ENCODE measurements at regions of chr1 and their contacts with region 1.

Region 1: DNA sequence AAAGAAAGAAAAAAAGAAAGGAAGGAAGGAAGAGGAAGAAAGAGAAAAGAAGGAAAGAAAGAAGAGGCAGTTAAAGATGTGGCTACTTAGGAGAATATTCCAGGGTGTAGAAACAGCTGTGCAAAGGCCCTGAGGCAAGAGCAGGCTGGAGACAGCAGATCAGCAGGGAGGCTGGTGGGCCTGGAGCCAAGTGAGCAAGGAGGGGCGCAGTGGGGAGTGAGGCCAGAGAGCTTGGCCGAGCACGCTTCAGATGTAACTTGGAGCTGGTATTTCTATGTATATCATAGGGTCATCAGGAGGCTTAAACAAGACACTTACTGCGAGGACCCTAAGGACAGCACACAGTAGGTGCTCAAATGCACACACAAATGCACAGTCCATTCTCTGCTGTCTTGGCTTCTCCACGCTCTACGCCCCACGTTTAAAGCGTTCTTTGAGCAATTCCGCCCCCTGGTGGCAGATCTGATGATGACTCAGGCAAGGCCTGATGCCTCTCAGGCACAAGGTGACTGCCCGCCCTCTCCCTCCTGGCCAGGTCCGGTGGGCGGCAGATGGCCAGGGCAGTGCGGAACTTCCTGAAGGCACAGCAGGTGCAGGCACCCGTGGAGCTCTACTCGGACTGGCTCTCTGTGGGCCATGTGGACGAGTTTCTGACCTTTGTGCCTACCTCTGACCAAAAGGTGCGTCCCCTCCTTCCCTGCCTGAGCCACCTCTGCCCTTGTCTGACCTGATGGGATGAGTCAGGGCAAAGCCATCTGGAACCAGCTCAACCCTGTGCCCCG is 11.9 kb upstream of the PADI3 start:
- DNase-seq: peak; percentile 95
- ATAC-seq: peak; percentile 84

Region 2: DNA sequence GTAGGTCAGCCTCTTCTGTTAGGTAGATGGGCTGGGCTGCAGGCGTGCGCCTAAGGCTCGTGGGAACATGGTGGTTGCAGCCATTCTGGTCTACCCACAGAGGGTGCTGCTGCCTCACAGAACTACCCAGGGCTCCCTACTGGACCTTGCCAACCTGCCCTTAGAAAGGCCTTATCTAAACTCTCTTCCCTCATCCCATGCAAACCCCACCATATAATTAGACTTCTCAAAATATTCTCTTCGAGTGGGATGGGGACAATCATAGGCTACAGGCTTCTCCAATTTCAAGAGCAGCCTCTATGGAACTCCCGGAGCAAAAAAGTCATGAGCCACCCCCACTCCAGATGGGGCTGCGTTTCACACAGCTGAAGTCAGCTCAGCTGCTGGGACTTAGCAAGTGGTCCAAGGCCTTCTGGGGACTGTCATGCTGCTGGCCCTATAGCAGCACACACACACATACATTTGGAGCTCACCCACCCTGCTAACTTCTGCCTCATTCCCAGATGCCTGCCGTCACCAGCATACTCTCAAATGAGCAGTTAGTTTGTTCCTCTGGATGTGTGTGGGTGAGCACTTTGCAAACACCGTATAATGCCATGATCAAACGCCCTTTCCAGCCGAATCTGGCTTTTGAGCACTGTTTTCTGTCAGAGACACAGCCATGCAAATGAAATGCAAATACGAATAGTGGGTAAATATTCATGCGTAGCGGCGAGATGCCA is 177.1 kb before region 1 on chr1:
- intact Hi-C with region 1: loop called (anchors 5 kb)
- DNase-seq: peak; percentile 74
- ATAC-seq: peak; percentile 83

Region 3: GRCh38 chr1:17119773-17120480 is 117.0 kb before region 1 on chr1:
- intact Hi-C with region 1: loop called (anchors 5 kb)
- DNase-seq: no peak
- ATAC-seq: peak; percentile 44

Region 4: DNA sequence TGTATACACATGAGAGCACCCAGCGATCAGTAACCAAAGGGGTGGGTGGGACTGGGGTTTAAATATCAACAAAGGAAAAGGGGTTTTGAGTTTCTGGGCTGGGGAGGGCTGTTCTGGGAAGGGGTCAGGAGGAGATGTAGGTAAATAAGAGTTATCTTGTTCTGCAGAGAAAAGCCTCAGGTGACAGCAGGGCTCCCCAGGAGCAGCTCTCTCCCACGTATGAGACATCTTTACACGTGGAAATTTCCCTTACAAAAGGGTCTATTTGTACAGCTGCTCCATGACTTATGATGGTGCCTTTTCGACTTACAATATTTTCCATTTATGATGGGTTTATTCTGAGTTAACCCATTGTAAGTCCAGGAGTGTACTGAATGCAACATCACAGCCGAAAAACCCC is 101.4 kb before region 1 on chr1:
- intact Hi-C with region 1: no loop called
- DNase-seq: no peak
- ATAC-seq: no peak

Region 5: GRCh38 chr1:17148950-17149608 is 87.9 kb before region 1 on chr1:
- intact Hi-C with region 1: loop called (anchors 5 kb)
- DNase-seq: no peak
- ATAC-seq: no peak

Region 6: GRCh38 chr1:17287130-17287776 is 50.3 kb after region 1 on chr1:
- intact Hi-C with region 1: no loop called
- DNase-seq: no peak
- ATAC-seq: no peak